Activated T-helper 2 cell treated with anti-CD3 and anti-CD28 coated beads, Interferon-gamma antibody, Interleukin-2, Interleukin-4, amounts not matched to agents 10 μg/mL and 5 μg/mL and 100 μg/mL, durations not matched to agents 14 hours and 24 hours and 36 hours (primary cell): ENCODE measurements at regions of chr2 and their contacts with region 1.

Region 1: GRCh38 chr2:53040536-53041229 is 726.9 kb upstream of the CHAC2 start:
- DNase-seq: no peak
- H3K4me3 Mint-ChIP-seq: no peak overlapping the region
- H3K27ac Mint-ChIP-seq: no peak overlapping the region
- H3K4me1 Mint-ChIP-seq: peaks cover 8% of the 10 kb centered on the region
- H3K27me3 Mint-ChIP-seq: no peaks in the 10 kb centered on the region

Region 2: DNA sequence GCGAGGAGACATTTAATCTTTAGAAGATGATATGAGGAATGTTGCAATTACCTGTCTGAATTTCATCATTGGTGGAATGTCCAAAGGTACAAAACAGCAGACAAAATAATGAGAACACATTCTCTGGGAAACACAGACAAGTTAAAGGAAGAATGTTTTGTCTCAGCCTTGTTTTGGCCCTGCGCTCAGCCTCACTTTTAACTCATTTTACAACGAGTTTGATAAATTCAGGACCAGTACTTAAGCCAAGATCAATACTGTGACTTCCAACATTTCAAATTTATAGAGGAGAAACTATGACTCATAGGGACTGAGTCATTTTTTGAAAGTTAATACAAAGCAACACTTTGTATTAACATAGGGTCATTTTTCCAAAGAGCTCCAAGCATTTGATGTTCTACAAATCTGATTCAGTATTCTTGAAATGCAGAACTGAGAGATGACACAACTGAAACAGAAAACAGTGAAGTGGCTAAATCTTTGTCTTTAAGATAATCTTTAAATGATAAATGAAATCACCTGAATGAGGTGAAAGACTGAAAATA is 106.3 kb before region 1 on chr2:
- intact Hi-C with region 1: loop called (anchors 2 kb)
- DNase-seq: no peak
- H3K4me3 Mint-ChIP-seq: no peak overlapping the region
- H3K27ac Mint-ChIP-seq: peak overlapping the region; percentile 10
- H3K4me1 Mint-ChIP-seq: peaks cover 22% of the 10 kb centered on the region
- H3K27me3 Mint-ChIP-seq: no peaks in the 10 kb centered on the region

Region 3: DNA sequence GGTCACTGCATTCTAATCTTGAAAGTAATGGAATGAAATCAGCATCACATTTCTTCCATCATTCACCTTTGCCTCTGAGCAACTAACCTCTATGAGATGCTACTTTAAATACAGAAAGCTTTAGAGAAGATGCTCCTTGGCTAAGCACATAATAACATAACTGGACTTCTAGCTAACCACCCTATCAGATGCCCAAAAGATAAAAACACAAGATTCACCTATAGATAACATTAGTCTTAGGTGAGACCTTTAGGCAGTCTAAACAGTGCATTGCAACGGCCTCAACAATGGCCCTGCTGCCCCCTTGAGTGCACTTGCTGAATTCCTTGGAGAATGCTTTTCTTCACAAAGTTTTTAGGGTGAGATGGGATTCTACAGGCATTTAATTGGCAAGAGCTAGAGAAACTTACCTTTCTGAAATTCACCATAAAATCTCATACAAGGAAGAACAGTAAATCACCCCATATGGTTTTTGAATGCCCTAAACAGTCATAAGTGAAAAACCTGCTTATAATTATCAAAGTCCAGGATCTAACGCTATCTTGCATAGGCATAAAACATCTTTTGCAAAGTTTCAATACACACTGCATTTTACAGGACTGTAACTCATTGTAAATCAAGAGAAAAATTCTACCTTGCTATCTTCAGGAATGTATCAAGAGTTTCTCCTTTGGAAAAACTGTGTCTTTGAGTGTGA is 64.3 kb before region 1 on chr2:
- intact Hi-C with region 1: loop called (anchors 2 kb)
- DNase-seq: no peak
- H3K4me3 Mint-ChIP-seq: no peak overlapping the region
- H3K27ac Mint-ChIP-seq: peak overlapping the region; percentile 8
- H3K4me1 Mint-ChIP-seq: peaks cover 5% of the 10 kb centered on the region
- H3K27me3 Mint-ChIP-seq: no peaks in the 10 kb centered on the region

Region 4: DNA sequence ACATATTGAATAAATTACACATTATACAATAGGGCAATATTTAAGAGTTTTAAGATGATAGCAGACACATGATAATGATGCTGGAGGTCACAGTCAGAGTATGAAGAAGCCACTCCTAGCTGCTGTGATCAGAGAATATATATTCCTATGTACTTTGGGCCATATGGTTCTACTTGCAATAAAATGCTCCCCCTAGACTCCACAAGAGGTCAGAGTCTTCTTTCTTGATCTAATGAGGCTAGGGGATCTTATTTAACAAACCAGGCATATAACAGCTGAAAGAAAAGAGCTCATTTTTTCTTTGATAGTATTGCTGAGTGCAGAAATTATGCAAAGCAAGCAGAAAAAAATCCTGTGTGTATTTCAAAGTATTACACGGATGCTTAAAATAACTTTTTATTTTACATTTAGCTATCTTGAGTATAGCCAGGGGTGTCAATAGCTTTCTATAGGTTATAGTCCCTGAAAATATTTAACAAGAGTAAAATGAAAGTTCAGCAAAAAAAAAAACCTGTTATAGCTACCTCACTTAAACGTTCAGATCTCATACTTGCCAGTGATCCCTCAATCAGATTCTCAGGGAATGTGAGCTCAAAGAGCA is 21.8 kb before region 1 on chr2:
- intact Hi-C with region 1: loop called (anchors 2 kb)
- DNase-seq: no peak
- H3K4me3 Mint-ChIP-seq: no peak overlapping the region
- H3K27ac Mint-ChIP-seq: no peak overlapping the region
- H3K4me1 Mint-ChIP-seq: no peaks in the 10 kb centered on the region
- H3K27me3 Mint-ChIP-seq: no peaks in the 10 kb centered on the region

Region 5: GRCh38 chr2:53077413-53077812 is 36.7 kb after region 1 on chr2:
- intact Hi-C with region 1: no loop called
- DNase-seq: no peak
- H3K4me3 Mint-ChIP-seq: no peak overlapping the region
- H3K27ac Mint-ChIP-seq: no peak overlapping the region
- H3K4me1 Mint-ChIP-seq: no peaks in the 10 kb centered on the region
- H3K27me3 Mint-ChIP-seq: no peaks in the 10 kb centered on the region